ENCODE measurements at regions of chr3 and their contacts with region 1.

Region 1: DNA sequence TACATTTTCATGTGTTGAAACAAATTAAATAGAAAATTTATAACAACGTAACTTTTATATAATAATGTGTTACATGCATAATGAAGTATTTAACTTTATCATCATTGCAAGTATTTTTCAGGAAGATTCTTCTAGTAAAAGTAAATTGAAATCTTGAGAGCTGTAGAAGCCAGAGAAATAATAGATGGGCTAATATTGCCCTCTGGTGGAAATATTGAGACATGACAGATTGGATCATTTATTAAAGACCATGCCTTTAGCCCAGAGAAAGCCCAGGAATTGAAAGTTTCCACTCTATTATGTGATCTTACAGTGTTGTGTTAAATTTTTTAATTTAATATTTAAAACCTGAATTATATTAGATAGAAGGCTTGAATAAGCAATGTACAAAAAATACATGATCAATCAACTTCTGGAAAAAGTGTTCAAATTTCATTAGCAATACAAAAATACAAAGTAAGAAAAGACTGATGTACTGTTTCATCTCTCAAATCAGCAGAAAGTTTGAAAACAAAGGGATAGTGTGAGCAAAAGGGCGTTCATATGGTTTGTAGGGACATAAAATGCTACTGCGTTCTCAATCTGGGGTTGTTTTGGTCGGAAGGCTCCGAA is 52.7 kb upstream of the SPTSSB start:
- DNase-seq: peak in 1 of 2 donors; percentile 68
- ATAC-seq: peak; percentile 61 to 69 (median 64)
- H3K4me3 ChIP-seq: no peak overlapping the region
- H3K4me3 Mint-ChIP-seq: no peak overlapping the region
- H3K27ac ChIP-seq: no peak overlapping the region
- H3K27ac Mint-ChIP-seq: no peak overlapping the region
- H3K4me1 ChIP-seq: no peaks in the 10 kb centered on the region
- H3K4me1 Mint-ChIP-seq: no peaks in the 10 kb centered on the region
- H3K27me3 ChIP-seq: no peaks in the 10 kb centered on the region
- H3K27me3 Mint-ChIP-seq: peaks cover 8 to 22% of the 10 kb centered on the region in 2 donors
- CTCF ChIP-seq: peak; percentile 96

Region 2: DNA sequence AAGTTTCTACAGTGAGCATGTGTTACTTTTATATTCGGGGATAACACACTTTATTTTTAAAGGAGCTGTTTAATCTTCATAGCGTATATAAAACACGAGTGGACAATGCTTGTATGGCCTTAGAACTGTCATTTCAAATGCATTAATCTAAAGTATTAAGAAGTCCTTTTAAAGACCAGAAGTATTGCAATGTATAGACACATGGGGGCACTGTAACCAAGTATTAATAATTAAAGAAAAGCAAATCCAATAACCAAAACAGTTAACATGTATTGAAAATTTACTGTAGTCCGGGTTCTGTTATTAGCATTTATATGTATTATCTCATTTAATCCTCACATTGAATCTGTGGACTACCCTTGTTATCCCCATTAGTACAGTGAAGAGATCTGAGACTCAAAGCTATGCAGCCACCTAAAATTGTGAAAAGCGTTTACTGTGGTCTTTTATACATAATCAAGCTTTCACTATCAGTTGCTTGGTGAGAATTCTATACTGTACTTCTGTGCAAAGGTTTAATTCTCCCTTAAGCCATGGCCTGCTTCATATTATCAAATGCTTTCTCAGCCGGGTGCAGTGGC is 737.0 kb before region 1 on chr3:
- intact Hi-C with region 1: loop called (anchors 5 kb)
- DNase-seq: peak in 1 of 2 donors; percentile 40
- ATAC-seq: no peak
- H3K4me3 ChIP-seq: no peak overlapping the region
- H3K4me3 Mint-ChIP-seq: no peak overlapping the region
- H3K27ac ChIP-seq: no peak overlapping the region
- H3K27ac Mint-ChIP-seq: no peak overlapping the region
- H3K4me1 ChIP-seq: no peaks in the 10 kb centered on the region
- H3K4me1 Mint-ChIP-seq: no peaks in the 10 kb centered on the region
- H3K27me3 ChIP-seq: no peaks in the 10 kb centered on the region
- H3K27me3 Mint-ChIP-seq: peaks cover 0 to 2% of the 10 kb centered on the region in 2 donors
- CTCF ChIP-seq: peak; percentile 34

Region 3: DNA sequence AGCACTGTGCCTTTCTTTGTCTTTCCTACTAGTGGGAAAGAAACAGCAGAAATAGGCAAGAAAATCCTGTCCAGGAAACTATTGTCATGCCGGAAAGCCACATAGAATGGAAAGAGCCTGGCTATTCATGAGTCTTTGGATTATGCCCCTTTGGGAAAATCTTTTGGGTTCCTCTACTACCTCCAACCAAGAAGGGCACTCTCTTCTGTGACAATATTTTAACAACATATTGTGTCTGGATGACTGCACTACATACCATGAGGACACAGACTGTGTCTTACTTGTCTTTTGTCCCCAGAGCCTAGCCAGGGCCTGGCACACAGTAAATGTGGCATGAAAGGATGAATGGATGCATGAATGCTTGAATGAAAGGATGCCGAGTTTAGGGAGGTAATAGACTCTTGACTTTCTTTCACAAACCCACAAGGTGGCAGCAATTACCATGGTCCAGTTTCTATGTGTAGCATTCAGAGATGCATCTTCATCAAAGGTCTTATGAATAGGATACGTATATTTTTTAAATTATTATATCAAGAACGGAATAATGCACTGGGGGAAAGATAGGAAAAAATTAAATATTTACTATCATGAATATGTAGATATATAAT is 716.7 kb before region 1 on chr3:
- intact Hi-C with region 1: loop called (anchors 1 kb)
- DNase-seq: peak in 1 of 2 donors; percentile 78
- ATAC-seq: peak; percentile 52 to 87 (median 86)
- H3K4me3 ChIP-seq: no peak overlapping the region
- H3K4me3 Mint-ChIP-seq: no peak overlapping the region
- H3K27ac ChIP-seq: no peak overlapping the region
- H3K27ac Mint-ChIP-seq: no peak overlapping the region
- H3K4me1 ChIP-seq: no peaks in the 10 kb centered on the region
- H3K4me1 Mint-ChIP-seq: no peaks in the 10 kb centered on the region
- H3K27me3 ChIP-seq: peaks cover 2% of the 10 kb centered on the region
- H3K27me3 Mint-ChIP-seq: peaks cover 26 to 70% of the 10 kb centered on the region in 2 donors
- CTCF ChIP-seq: peak; percentile 75

Region 4: DNA sequence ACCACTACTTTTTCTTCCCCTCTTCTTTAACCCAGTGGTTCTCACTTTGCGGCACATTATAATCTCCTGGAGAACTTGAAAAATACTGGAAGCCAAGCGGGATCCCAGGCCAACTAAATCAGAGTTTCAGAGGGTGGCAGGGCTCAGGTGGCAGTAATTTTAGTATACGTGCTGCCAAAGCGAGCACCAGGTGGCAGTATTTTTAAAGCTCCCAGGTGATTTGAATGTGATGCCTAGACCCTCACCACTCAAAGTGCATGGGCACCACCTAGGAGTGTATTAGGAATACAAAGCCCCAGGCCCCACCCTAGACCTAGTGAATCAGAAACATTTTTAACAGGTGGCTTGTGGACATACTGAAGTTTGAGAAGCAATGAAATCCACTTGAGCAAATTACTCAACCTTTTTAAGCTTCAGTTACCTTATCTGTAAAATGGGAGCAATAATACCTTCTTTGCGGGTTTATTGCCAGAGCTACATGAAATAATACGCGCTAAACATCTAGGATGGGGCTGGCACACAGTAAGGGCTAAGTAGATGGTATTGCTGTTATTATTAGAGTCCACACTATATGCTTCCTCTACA is 327.2 kb before region 1 on chr3:
- intact Hi-C with region 1: loop called (anchors 2 kb)
- DNase-seq: peak in 1 of 2 donors; percentile 52
- ATAC-seq: no peak
- H3K4me3 ChIP-seq: no peak overlapping the region
- H3K4me3 Mint-ChIP-seq: no peak overlapping the region
- H3K27ac ChIP-seq: no peak overlapping the region
- H3K27ac Mint-ChIP-seq: no peak overlapping the region
- H3K4me1 ChIP-seq: no peaks in the 10 kb centered on the region
- H3K4me1 Mint-ChIP-seq: no peaks in the 10 kb centered on the region
- H3K27me3 ChIP-seq: no peaks in the 10 kb centered on the region
- H3K27me3 Mint-ChIP-seq: no peaks in the 10 kb centered on the region
- CTCF ChIP-seq: no peak

Region 5: GRCh38 chr3:161274719-161275298 is 149.2 kb before region 1 on chr3:
- intact Hi-C with region 1: loop called (anchors 1 kb)
- DNase-seq: peak in 1 of 2 donors; percentile 69
- ATAC-seq: peak; percentile 43 to 59 (median 46)
- H3K4me3 ChIP-seq: no peak overlapping the region
- H3K4me3 Mint-ChIP-seq: no peak overlapping the region
- H3K27ac ChIP-seq: no peak overlapping the region
- H3K27ac Mint-ChIP-seq: no peak overlapping the region
- H3K4me1 ChIP-seq: peaks cover 7% of the 10 kb centered on the region
- H3K4me1 Mint-ChIP-seq: no peaks in the 10 kb centered on the region
- H3K27me3 ChIP-seq: no peaks in the 10 kb centered on the region
- H3K27me3 Mint-ChIP-seq: peaks cover 0 to 3% of the 10 kb centered on the region in 2 donors
- CTCF ChIP-seq: peak; percentile 57